Activated naive CD4-positive, alpha-beta T cell treated with anti-CD3 and anti-CD28 coated beads for 36 hours (primary cell): ENCODE measurements at regions of chr1 and their contacts with region 1.

Region 1: GRCh38 chr1:152440635-152441471 is 26.8 kb upstream of the CRNN start:
- DNase-seq: peak; percentile 82
- H3K4me3 Mint-ChIP-seq: no peak overlapping the region
- H3K27ac Mint-ChIP-seq: no peak overlapping the region
- H3K4me1 Mint-ChIP-seq: no peaks in the 10 kb centered on the region
- H3K27me3 Mint-ChIP-seq: peaks cover 17% of the 10 kb centered on the region

Region 2: GRCh38 chr1:152141974-152142584 is 298.8 kb before region 1 on chr1:
- CTCF ChIA-PET with region 1: no interaction called
- intact Hi-C with region 1: loop called (anchors 1 kb)
- DNase-seq: peak; percentile 62
- H3K4me3 Mint-ChIP-seq: no peak overlapping the region
- H3K27ac Mint-ChIP-seq: no peak overlapping the region
- H3K4me1 Mint-ChIP-seq: peaks cover 9% of the 10 kb centered on the region
- H3K27me3 Mint-ChIP-seq: peaks cover 50% of the 10 kb centered on the region

Region 3: DNA sequence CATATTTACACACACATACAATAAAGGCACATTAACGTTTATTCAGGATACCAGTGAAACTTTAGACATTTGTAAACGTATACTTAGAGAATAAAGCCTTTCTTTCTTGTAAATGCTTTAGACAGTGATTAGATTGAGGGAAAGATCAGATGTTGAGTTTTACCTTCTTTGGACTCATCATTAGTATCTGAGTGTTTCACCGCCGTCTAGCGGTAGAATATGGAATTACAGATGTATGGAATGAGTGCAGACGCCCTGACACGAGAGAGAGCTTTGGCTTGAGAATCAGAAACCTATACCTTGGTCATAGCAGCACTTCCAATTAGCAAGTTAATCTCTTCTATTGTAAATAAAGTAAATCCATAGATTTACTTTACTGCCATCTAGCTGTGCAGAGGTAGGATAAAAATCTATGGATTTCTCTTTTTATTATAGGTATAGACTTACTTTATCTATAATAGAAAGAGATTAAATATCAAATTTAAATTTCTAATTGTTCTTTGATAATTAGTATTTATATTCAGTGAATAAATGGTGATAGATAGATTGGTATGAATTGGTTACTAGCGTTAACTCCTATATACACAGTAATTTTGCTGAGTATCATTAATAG is 93.6 kb before region 1 on chr1:
- CTCF ChIA-PET with region 1: interaction called, 15 read pairs
- intact Hi-C with region 1: loop called (anchors 5 kb)
- DNase-seq: peak; percentile 72
- H3K4me3 Mint-ChIP-seq: no peak overlapping the region
- H3K27ac Mint-ChIP-seq: no peak overlapping the region
- H3K4me1 Mint-ChIP-seq: peaks cover 7% of the 10 kb centered on the region
- H3K27me3 Mint-ChIP-seq: peaks cover 21% of the 10 kb centered on the region

Region 4: GRCh38 chr1:152380932-152381331 is 59.9 kb before region 1 on chr1:
- CTCF ChIA-PET with region 1: no interaction called
- intact Hi-C with region 1: no loop called
- DNase-seq: no peak
- H3K4me3 Mint-ChIP-seq: no peak overlapping the region
- H3K27ac Mint-ChIP-seq: no peak overlapping the region
- H3K4me1 Mint-ChIP-seq: no peaks in the 10 kb centered on the region
- H3K27me3 Mint-ChIP-seq: peaks cover 7% of the 10 kb centered on the region

Region 5: GRCh38 chr1:152398812-152399698 is 41.8 kb before region 1 on chr1:
- CTCF ChIA-PET with region 1: interaction called, 7 read pairs
- intact Hi-C with region 1: loop called (anchors 2 kb)
- DNase-seq: peak; percentile 22
- H3K4me3 Mint-ChIP-seq: no peak overlapping the region
- H3K27ac Mint-ChIP-seq: no peak overlapping the region
- H3K4me1 Mint-ChIP-seq: no peaks in the 10 kb centered on the region
- H3K27me3 Mint-ChIP-seq: peaks cover 14% of the 10 kb centered on the region